CD8-positive, alpha-beta T cell (primary cell): ENCODE measurements at regions of chr19 and their contacts with region 1.

Region 1: DNA sequence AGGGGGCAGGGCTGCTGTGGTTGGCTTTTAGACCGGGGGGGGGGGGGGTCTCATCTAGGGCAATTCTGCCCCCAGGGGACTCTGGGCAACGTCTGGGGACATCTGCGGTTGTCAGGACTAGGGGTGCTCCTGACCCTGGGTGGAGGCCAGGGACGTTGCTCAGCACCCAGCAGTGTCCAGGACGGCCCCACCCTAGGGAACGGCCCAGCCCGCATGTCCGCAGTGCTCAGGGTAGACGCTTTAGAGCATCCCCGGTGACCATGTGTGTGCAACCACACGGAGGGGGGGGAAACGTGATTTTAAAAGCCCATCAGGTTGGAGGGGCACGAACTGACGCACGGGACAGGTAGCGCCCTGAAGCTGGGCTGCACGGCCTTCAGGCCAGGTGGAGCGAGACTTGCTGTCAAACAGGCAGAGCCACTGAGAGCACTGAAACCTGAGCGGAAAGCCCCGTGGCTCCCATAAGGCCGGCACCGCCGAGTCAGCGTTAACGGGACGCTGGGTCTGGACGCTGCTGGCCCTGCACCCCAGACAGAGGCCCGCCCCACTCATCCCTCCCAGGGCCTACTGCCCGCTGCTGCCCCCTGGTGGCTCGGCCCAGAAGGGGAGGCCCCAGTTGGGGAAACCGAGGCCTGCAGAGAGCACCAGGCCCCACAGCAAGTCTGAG is 8.3 kb downstream of the CACTIN start:
- DNase-seq: peak in 8 of 9 experiments; percentile 31 to 79 (median 56)
- ATAC-seq: peak; percentile 68
- H3K4me3 ChIP-seq: no peak overlapping the region
- H3K4me3 Mint-ChIP-seq: no peak overlapping the region
- H3K27ac ChIP-seq: no peak overlapping the region
- H3K27ac Mint-ChIP-seq: no peak overlapping the region
- H3K4me1 ChIP-seq: peaks cover 13% of the 10 kb centered on the region
- H3K4me1 Mint-ChIP-seq: peaks cover 10% of the 10 kb centered on the region
- H3K27me3 ChIP-seq: no peaks in the 10 kb centered on the region
- H3K27me3 Mint-ChIP-seq: no peaks in the 10 kb centered on the region
- CTCF ChIP-seq: peak; percentile 69

Region 2: DNA sequence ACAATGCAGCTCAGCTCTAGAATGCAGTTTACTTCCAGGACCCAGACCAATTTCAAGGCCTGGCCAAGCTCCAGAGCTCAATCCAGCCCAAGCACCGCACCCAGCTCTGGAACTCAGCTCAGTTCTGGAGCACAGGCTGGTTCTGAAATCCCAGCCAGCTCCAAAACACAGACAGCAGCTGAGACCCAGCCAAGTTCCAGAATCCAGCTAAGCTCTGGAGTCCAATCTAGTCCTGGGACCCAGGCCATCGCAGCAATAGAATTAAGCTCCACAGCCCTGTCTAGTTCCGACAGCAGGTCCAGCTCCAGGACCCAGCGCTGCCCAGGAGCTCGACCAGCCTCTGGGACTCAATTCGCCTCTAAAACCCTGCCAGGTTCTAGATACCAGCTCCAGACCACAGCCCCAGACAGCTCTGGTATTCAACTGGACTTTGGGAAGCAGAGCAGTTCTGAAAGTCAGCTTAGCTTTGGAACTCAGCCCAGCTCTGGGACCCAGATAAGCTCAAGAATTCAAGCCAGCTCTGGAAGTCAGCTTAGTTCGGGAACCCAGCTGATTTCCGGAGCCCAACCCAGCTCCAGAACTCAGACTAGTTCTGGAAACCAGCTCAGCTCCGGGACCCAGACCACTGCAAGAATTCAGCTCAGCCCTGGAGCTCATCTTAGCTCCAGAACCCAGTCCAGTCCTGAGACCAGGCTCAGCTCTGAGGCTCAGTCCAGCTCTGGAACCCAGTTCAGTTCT is 26.2 kb before region 1 on chr19:
- CTCF ChIA-PET with region 1: interaction called, 55 read pairs
- POLR2A ChIA-PET with region 1: interaction called, 3 read pairs
- intact Hi-C with region 1: no loop called
- DNase-seq: no peak
- ATAC-seq: no peak
- H3K4me3 ChIP-seq: no peak overlapping the region
- H3K4me3 Mint-ChIP-seq: no peak overlapping the region
- H3K27ac ChIP-seq: no peak overlapping the region
- H3K27ac Mint-ChIP-seq: no peak overlapping the region
- H3K4me1 ChIP-seq: no peaks in the 10 kb centered on the region
- H3K4me1 Mint-ChIP-seq: peaks cover 2% of the 10 kb centered on the region
- H3K27me3 ChIP-seq: no peaks in the 10 kb centered on the region
- H3K27me3 Mint-ChIP-seq: no peaks in the 10 kb centered on the region
- CTCF ChIP-seq: no peak